Transverse colon (tissue), 4 donors: ENCODE measurements at regions of chr20 and their contacts with region 1.

Region 1: GRCh38 chr20:2206957-2207769 is 88.6 kb upstream of the TGM3 start:
- DNase-seq: peak; percentile 81
- H3K4me3 ChIP-seq: peak overlapping the region; percentile 28 to 62 (median 44)
- H3K27ac ChIP-seq: no peak overlapping the region
- H3K4me1 ChIP-seq: peaks cover 3 to 26% (median 13%) of the 10 kb centered on the region in 4 donors
- H3K27me3 ChIP-seq: peaks cover 38% of the 10 kb centered on the region
- CTCF ChIP-seq: peak; percentile 65 to 80 (median 76)
- EP300 ChIP-seq: no peak
- POLR2A ChIP-seq: no peak

Region 2: GRCh38 chr20:2349818-2350508 is 142.8 kb after region 1 on chr20:
- in situ Hi-C with region 1: loop called in 1 of 4 experiments (anchors 5 kb)
- intact Hi-C with region 1: no loop called
- DNase-seq: no peak
- H3K4me3 ChIP-seq: no peak overlapping the region
- H3K27ac ChIP-seq: no peak overlapping the region
- H3K4me1 ChIP-seq: no peaks in the 10 kb centered on the region
- H3K27me3 ChIP-seq: peaks cover 21% of the 10 kb centered on the region
- CTCF ChIP-seq: no peak
- EP300 ChIP-seq: no peak
- POLR2A ChIP-seq: no peak

Region 3: GRCh38 chr20:2387180-2387577 is 180.0 kb after region 1 on chr20:
- in situ Hi-C with region 1: no loop called
- intact Hi-C with region 1: no loop called
- DNase-seq: peak; percentile 25
- H3K4me3 ChIP-seq: no peak overlapping the region
- H3K27ac ChIP-seq: no peak overlapping the region
- H3K4me1 ChIP-seq: no peaks in the 10 kb centered on the region
- H3K27me3 ChIP-seq: no peaks in the 10 kb centered on the region
- CTCF ChIP-seq: peak in 2 of 5 experiments; percentile 14 to 39
- EP300 ChIP-seq: no peak
- POLR2A ChIP-seq: no peak

Region 4: DNA sequence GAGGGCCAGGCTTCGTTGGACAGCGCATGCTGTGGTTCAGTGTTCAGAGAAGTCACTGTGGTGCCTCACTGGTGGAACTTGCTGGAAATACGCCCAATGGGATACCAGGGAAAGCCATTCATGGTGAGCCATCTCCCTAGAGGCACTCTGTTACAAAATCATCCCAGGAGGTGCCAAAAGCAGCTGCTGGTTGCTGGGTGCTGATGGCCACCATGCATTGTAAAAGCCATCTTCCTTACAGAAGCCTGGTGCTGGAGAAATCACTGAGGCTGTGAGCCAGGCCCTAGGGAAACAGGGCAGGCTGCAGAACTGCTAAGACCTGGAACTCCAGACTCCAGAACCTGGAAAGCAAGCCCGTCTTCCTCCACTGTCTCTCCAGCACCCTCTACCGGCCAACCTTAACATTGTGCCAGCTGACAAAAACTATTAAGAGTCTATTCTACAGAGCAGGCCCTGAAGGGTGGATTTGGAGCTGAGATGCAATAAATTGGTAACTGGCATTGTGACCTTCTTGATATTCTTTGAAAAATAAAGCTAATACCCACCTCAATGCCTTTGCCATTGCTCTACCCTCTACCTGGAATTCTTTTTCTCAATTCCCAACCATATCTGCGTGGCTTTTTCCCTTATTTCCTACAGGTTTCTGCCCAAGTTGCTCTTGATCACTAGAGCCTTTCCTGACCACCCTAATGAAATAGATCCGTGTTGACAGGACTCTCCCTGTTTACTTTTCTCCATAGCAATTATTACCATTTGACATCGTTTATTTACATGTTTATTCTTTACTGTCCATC is 245.0 kb after region 1 on chr20:
- in situ Hi-C with region 1: loop called in 3 of 4 experiments (anchors 5 to 25 kb)
- intact Hi-C with region 1: loop called (anchors 10 kb)
- DNase-seq: peak; percentile 69
- H3K4me3 ChIP-seq: no peak overlapping the region
- H3K27ac ChIP-seq: no peak overlapping the region
- H3K4me1 ChIP-seq: peaks cover 0 to 4% (median 0%) of the 10 kb centered on the region in 4 donors
- H3K27me3 ChIP-seq: no peaks in the 10 kb centered on the region
- CTCF ChIP-seq: peak; percentile 63 to 87 (median 79)
- EP300 ChIP-seq: no peak
- POLR2A ChIP-seq: no peak

Region 5: DNA sequence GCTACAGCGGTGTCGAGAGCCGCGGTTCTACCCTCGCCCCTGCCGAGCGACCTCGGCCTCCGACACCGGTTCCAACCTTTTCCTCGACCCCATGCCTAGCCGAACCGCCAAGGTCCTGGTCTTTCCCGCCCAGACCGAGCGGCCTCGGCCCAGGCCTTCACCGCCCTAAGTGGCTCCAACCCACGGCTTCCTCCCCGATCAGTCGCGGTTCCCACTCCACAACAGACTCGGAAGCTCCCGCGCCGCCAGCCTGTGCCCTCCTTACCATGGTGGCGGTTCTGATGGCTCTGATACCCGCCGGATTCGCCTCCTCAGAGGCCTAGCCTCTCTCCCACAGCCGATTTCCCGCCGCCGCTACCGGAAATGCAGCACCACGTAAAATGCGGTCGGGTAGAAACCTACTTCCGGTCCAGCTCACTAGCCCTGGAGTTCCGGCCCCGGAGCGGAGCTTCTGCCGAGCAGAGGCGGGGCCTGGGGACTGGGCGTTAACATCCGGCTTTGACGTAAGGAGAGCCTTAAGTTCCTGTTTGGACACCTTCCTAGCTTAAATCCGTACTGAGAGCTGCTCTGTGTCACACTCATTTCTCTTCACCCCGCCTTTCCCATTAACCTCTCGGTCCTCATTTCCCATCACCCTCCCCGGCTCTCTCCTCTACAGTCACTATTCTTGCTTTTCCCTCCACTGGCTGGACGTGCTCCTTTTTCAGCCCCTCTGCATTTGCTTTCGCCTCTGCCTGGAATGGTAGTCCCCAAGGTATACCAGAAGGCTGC is 263.4 kb after region 1 on chr20 and contains the start of gene SNRPB:
- in situ Hi-C with region 1: loop called in 1 of 4 experiments (anchors 25 kb)
- intact Hi-C with region 1: no loop called
- DNase-seq: peak; percentile 98
- H3K4me3 ChIP-seq: peak within 1 kb of the TSS; percentile 64 to 81 (median 72)
- H3K27ac ChIP-seq: peak within 1 kb of the TSS; percentile 92 to 96 (median 92)
- H3K4me1 ChIP-seq: peaks cover 12 to 25% (median 17%) of the 10 kb centered on the region in 4 donors
- H3K27me3 ChIP-seq: no peaks in the 10 kb centered on the region
- CTCF ChIP-seq: peak in 1 of 5 experiments; percentile 8
- EP300 ChIP-seq: no peak
- POLR2A ChIP-seq: peak; percentile 91
- total RNA-seq, gene SNRPB: 50.9 to 144 (median 125) TPM